ENCODE measurements at regions of chrX and their contacts with region 1.

Region 1: DNA sequence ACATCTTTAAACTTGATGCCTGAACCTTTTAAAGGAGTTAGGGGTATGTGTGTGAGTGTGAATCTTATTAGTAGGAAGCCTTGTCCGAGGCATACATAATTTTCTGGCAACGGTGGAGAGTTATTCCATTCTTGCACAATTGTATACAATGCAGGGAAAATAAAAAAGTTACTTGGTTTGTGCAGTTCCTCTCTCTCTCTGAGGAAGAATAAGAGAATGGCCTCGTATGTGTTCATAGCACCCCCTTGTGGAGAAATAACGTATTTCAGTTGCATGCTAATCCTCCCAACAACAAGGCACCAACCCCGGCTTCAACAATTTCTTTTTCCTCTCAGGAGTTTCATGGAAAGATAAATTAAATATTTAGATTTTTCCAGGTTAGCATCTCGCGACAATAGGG is 33.7 kb upstream of the FGF13 start:
- DNase-seq: peak; percentile 74
- ATAC-seq: peak; percentile 51; the same call in 1 of the 2 replicates
- H3K4me3 ChIP-seq: no peak overlapping the region
- H3K27ac ChIP-seq: no peak overlapping the region
- H3K4me1 ChIP-seq: no peaks in the 10 kb centered on the region; the same call in 1 of the 2 replicates
- H3K27me3 ChIP-seq: no peaks in the 10 kb centered on the region
- CTCF ChIP-seq: peak; percentile 66

Region 2: DNA sequence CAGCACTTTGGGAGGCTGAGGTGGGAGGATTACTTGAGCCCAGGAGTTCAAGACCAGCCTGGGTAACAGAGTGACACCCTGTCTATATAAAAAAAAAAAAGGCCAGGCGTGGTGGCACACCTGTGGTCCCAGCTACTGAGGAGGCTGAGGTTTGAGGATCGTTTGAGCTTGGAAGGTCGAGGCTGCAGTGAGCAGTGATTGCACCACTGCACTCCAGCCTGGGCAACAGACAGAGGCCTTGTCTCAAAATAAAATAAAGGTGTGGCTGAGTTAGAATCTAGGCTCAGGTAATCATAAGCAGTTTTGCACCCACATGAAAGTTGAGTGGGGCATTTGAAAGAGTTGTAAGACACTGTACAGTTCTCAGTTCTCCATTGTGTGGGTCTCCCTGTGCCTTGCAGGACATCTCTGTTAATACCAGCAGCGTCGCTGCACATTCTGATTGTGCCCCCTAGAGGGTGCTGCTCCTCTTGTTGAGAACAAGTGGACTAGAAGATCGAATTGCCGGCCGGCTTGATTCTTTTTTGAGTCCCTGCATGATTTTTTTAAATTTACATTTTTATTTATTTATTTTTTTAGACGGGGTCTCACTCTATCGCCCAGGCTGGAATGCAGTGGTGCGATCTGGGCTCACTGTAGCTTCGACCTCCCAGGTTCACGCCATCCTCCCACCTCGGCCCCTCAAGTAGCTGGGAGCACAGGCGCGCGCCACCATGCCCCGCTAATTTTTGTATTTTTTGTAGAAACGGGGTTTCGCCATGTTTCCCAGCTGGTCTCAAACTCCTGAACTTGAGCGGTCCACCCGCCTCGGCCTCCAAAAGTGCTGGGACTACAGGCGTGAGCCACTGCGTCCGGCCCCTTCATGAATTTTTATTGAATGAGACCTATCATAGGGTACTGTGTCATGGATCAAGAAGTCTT is 1791.1 kb before region 1 on chrX:
- CTCF ChIA-PET with region 1: interaction called, 6 read pairs
- POLR2A ChIA-PET with region 1: no interaction called
- intact Hi-C with region 1: loop called (anchors 10 kb)
- DNase-seq: peak; percentile 88
- ATAC-seq: peak; percentile 94
- H3K4me3 ChIP-seq: no peak overlapping the region
- H3K27ac ChIP-seq: no peak overlapping the region
- H3K4me1 ChIP-seq: no peaks in the 10 kb centered on the region
- H3K27me3 ChIP-seq: no peaks in the 10 kb centered on the region
- CTCF ChIP-seq: peak; percentile 66

Region 3: GRCh38 chrX:138057883-138058282 is 687.3 kb before region 1 on chrX:
- CTCF ChIA-PET with region 1: no interaction called
- POLR2A ChIA-PET with region 1: no interaction called
- intact Hi-C with region 1: loop called (anchors 1 kb)
- DNase-seq: peak; percentile 46
- ATAC-seq: no peak
- H3K4me3 ChIP-seq: no peak overlapping the region
- H3K27ac ChIP-seq: no peak overlapping the region
- H3K4me1 ChIP-seq: 0 out of 2 replicates have a peak, but pooled peaks cover 4% of the 10 kb centered on the region
- H3K27me3 ChIP-seq: no peaks in the 10 kb centered on the region
- CTCF ChIP-seq: peak; percentile 55

Region 4: DNA sequence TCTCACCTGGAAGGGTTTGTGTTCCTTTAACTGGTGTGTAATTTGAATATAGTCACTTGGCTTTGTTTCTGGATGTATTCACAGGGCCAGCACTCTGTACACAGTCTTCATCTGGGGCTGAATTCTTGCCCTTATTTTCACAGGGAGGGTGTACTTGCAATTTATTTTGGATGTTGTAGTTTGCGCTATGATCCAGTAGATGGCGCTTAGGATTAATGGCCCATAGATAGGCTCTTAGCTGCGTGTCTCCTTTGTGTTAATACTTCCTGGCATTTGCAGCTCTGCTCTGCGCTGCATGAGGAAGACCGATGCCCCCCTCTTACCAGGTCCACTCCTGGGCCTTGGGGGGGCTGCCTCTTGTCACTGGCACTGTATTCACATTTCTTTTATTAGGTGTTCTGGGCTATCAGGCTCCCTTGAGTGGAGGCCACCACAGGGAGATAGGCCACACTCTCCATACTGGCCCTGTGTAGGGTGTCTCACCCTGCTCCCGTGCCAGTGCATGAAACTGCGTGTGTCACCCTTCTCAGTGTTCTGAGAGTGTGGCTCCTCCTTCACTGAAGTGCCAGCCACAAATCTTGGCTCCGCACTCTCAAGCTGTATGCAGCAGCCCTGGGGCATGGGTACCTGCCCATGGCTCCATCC is 617.0 kb before region 1 on chrX:
- CTCF ChIA-PET with region 1: no interaction called
- POLR2A ChIA-PET with region 1: no interaction called
- intact Hi-C with region 1: loop called (anchors 1 kb)
- DNase-seq: peak; percentile 75
- ATAC-seq: peak; percentile 79
- H3K4me3 ChIP-seq: peak overlapping the region; percentile 46
- H3K27ac ChIP-seq: peak overlapping the region; percentile 89
- H3K4me1 ChIP-seq: peaks cover 20% of the 10 kb centered on the region
- H3K27me3 ChIP-seq: no peaks in the 10 kb centered on the region
- CTCF ChIP-seq: peak; percentile 72

Region 5: GRCh38 chrX:138191998-138192397 is 553.2 kb before region 1 on chrX:
- CTCF ChIA-PET with region 1: no interaction called
- POLR2A ChIA-PET with region 1: no interaction called
- intact Hi-C with region 1: loop called (anchors 1 kb)
- DNase-seq: peak; percentile 50
- ATAC-seq: peak; percentile 48; the same call in 1 of the 2 replicates
- H3K4me3 ChIP-seq: no peak overlapping the region
- H3K27ac ChIP-seq: no peak overlapping the region
- H3K4me1 ChIP-seq: no peaks in the 10 kb centered on the region
- H3K27me3 ChIP-seq: no peaks in the 10 kb centered on the region
- CTCF ChIP-seq: peak; percentile 77

Region 6: DNA sequence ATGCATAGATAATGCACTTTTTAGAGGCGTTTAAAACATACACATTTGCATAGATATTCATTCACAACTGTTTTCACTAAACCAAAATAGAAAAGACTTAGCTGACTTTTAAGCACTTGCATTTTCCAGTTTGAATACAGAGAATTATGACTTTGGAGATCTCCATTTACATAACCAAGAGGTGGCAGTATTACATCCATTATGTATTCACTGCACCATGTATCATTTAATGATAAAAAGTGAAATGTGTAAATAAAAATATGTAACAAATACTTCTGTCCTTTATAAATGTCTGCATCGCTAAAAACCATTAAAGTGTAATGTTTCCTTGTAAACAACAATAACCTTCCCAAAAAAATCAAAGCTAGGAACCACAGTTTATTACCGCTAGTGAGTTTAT is 446.9 kb before region 1 on chrX:
- CTCF ChIA-PET with region 1: no interaction called
- POLR2A ChIA-PET with region 1: no interaction called
- intact Hi-C with region 1: loop called (anchors 5 kb)
- DNase-seq: no peak
- ATAC-seq: no peak
- H3K4me3 ChIP-seq: no peak overlapping the region
- H3K27ac ChIP-seq: no peak overlapping the region
- H3K4me1 ChIP-seq: no peaks in the 10 kb centered on the region
- H3K27me3 ChIP-seq: no peaks in the 10 kb centered on the region
- CTCF ChIP-seq: no peak; the same call in 1 of the 2 replicates